Heart right ventricle (tissue), 16 donors: ENCODE measurements at regions of chr5 and their contacts with region 1.

Region 1: DNA sequence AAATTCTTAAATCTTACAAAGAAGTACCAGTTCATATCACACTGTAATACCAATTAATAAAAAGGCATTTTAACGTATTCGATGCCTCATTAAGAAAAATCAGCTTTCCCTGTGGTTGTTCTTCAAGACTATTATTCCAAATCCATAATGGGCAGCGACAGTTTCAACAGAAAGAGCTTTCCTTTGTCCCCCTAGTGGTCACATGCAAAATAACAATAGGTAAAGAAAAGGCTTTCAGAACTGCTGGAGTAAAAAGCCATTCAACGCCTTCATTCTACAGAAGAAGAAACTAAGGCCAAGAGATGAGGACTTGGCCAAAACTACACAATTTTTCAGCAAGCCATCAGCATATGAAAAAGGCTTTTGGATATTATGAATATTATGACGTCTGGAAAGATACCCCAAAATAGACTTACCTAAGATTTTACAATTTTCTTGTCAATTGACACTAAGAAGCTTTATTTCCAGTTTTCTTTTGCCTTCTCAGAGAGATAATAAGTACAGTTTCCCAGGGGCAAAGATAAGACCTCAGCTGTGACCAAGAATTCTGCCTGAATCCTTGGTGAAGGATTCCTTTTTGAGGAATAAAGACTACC is 6.7 kb upstream of the CDH6 start:
- DNase-seq: no peak
- ATAC-seq: no peak
- H3K4me3 ChIP-seq: no peak overlapping the region
- H3K27ac ChIP-seq: no peak overlapping the region
- H3K4me1 ChIP-seq: no peaks in the 10 kb centered on the region
- H3K27me3 ChIP-seq: peaks cover 0 to 14% (median 0%) of the 10 kb centered on the region in 7 donors
- CTCF ChIP-seq: peak; percentile 58 to 84 (median 73)

Region 2: DNA sequence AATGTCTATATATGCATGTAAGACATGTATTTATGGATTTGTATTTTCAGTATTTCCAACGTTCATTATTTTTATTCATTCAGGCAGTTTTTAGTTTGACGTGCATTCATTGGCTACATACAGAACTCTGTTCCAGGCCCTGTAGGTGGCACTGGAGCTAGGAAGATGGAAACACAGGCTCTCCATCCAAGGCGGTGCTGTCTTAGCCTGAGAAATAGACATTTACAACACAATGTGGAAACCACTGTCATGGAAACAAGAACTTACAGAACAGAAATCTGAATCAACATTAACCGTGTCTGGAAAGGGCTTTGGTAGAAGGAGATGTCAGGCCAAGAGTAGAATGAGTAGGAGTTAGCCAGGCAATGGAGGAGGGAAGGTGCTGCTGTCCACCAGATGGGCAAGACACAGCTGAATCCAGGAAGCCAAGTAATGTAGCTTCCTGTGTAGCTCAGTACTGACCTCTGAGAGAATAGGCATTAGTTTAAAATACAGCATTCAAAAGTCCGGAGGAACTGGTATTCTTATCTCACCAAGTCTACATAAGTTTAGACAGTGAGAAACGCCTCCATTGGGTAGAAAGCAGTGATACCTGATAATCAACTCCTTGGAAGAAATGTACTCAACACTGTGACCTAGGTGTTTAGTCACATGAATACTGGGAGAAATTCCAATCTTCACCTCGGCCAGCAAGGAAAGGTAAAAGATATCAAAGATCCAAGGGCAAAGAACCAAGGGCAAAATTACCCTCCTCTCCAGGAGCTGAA is 381.8 kb before region 1 on chr5:
- intact Hi-C with region 1: loop called in 9 of 10 experiments (anchors 1 to 10 kb)
- DNase-seq: peak in 1 of 2 donors; percentile 8
- ATAC-seq: peak in 5 of 8 donors; percentile 59 to 83 (median 80)
- H3K4me3 ChIP-seq: no peak overlapping the region
- H3K27ac ChIP-seq: no peak overlapping the region
- H3K4me1 ChIP-seq: no peaks in the 10 kb centered on the region
- H3K27me3 ChIP-seq: no peaks in the 10 kb centered on the region
- CTCF ChIP-seq: peak in 8 of 9 donors; percentile 10 to 67 (median 51)

Region 3: DNA sequence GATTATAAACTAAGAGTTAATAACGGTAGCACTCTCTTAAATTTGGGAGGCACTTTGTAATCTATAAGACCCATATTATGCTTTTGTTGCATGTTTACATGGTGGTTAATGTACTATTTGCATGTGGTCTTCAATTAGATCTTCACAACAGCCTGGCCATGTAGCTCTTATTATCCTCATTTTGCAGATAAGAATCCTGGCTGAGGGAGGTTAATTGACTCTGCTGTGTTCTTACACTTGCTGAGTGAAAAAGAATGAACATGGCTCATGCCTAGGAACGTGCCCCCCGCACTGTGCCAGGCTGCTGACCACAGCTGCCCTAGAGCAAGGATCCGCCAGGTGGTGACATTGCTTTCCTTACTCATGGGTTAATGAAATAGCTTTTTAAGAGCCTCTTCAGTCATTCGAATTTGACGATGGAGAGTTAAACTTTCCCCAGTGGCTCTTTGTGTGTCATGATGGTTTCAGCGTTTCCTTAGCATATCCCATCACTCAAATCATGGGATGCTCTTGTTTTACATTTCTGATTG is 104.6 kb after region 1 on chr5:
- intact Hi-C with region 1: no loop called
- DNase-seq: no peak
- ATAC-seq: no peak
- H3K4me3 ChIP-seq: no peak overlapping the region
- H3K27ac ChIP-seq: no peak overlapping the region
- H3K4me1 ChIP-seq: no peaks in the 10 kb centered on the region
- H3K27me3 ChIP-seq: no peaks in the 10 kb centered on the region
- CTCF ChIP-seq: no peak

Region 4: GRCh38 chr5:31449174-31449573 is 262.4 kb after region 1 on chr5:
- intact Hi-C with region 1: no loop called
- DNase-seq: no peak
- ATAC-seq: no peak
- H3K4me3 ChIP-seq: no peak overlapping the region
- H3K27ac ChIP-seq: no peak overlapping the region
- H3K4me1 ChIP-seq: no peaks in the 10 kb centered on the region
- H3K27me3 ChIP-seq: no peaks in the 10 kb centered on the region
- CTCF ChIP-seq: no peak